Heart left ventricle (tissue), 16 donors: ENCODE measurements at regions of chr7 and their contacts with region 1.

Region 1: DNA sequence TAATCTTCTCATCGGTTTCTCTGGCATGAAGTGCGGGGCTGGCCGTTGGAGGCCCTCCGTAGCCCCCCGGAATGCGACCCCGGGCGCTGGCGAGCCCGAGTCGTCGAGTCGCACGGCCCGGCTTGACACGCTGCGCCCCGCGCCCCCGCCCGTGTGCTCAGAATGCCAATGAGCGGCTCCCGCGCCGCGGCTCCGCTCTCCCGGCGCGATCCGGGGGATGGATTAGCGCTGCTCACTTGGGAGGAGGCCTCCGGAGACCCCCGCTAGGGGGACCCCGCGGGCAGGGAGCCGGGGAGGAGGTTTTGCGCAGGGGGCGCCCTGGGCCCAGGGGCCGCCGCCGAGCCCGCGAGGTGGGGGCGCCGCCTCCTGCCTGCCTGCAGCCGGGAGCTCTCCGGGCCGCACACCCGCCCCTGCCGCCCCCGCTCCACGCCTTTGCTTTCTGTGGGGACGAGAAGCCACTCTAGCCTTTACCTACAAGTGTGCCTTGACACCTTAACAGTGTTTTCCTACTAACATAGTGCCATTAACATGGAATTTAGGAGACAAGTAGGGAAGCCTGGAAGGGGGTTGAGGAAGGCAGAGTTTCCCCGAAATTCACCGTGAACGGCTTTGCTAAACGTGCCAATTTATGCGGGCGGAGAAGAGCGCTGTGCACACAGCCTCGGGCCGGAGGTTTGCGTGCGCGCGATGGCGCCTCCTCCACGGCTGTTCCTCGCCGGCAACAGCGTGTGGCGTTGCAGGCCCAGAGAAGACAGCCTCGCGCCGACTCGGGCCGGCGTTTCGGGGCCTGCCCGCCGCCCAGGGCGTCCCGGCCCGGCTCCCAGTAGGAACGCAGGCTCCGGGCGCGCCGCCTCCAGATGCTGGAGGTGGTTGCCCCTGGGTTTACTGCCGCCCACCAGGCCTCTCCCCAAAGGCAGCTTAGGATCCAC is 7.1 kb downstream of the SHH start:
- DNase-seq: peak in 3 of 5 donors; percentile 31 to 69 (median 50)
- ATAC-seq: peak in 3 of 4 donors; percentile 63 to 82 (median 75)
- H3K4me3 ChIP-seq: peak overlapping the region; percentile 12 to 52 (median 40)
- H3K27ac ChIP-seq: no peak overlapping the region
- H3K4me1 ChIP-seq: peaks cover 0 to 70% (median 34%) of the 10 kb centered on the region in 12 donors
- H3K27me3 ChIP-seq: peaks cover 68 to 100% (median 92%) of the 10 kb centered on the region in 9 donors
- CTCF ChIP-seq: peak in 11 of 12 donors; percentile 13 to 60 (median 40)
- POLR2A ChIP-seq: no peak

Region 2: GRCh38 chr7:155653803-155654202 is 151.4 kb before region 1 on chr7:
- intact Hi-C with region 1: no loop called
- DNase-seq: no peak
- ATAC-seq: peak in 2 of 4 donors; percentile 41 to 68
- H3K4me3 ChIP-seq: no peak overlapping the region
- H3K27ac ChIP-seq: no peak overlapping the region
- H3K4me1 ChIP-seq: peaks cover 0 to 64% (median 25%) of the 10 kb centered on the region in 12 donors
- H3K27me3 ChIP-seq: no peaks in the 10 kb centered on the region
- CTCF ChIP-seq: no peak
- POLR2A ChIP-seq: no peak

Region 3: DNA sequence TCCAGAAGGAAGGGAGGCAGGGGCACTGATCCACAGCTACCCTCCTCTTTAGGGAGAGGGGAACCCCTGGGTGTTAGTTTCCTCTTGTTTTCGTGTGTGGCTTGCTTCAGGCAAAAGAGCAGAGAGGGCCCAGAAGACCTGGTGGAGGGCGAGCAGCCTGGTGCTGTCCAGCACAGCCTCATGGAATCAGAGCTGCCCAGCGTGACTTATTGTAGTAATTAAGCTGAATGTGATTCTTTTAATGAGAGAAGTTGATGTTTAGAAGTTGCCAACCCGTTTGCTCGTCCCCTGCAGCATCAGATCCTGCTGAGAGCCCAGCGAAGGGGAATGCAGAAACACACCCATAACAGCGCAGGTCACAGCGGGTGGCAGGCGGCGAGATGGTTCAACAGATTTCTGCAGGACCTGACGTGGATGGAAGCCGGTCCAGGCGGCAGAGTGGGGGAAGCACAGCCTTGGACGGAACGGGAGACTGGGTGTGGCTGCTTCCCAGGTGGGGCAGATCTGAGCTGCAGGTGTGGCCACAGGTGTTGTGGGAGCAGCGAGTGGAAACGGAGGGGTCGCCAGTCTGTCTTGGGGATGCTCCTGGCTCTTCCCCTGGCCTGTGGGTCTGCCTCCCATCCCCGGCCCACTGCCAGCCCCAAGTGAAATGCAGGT is 60.8 kb after region 1 on chr7:
- intact Hi-C with region 1: no loop called
- DNase-seq: peak in 2 of 5 donors; percentile 2 to 38
- ATAC-seq: no peak
- H3K4me3 ChIP-seq: no peak overlapping the region
- H3K27ac ChIP-seq: no peak overlapping the region
- H3K4me1 ChIP-seq: peaks cover 0 to 5% (median 0%) of the 10 kb centered on the region in 12 donors
- H3K27me3 ChIP-seq: peaks cover 0 to 45% (median 6%) of the 10 kb centered on the region in 9 donors
- CTCF ChIP-seq: no peak
- POLR2A ChIP-seq: no peak

Region 4: GRCh38 chr7:156764016-156764669 is 959.0 kb after region 1 on chr7:
- intact Hi-C with region 1: loop called in 3 of 10 experiments (anchors 5 to 10 kb)
- DNase-seq: peak; percentile 59 to 76 (median 64)
- ATAC-seq: peak; percentile 93 to 98 (median 96)
- H3K4me3 ChIP-seq: no peak overlapping the region
- H3K27ac ChIP-seq: no peak overlapping the region
- H3K4me1 ChIP-seq: peaks cover 0 to 9% (median 0%) of the 10 kb centered on the region in 12 donors
- H3K27me3 ChIP-seq: no peaks in the 10 kb centered on the region
- CTCF ChIP-seq: peak; percentile 39 to 73 (median 62)
- POLR2A ChIP-seq: no peak

Region 5: DNA sequence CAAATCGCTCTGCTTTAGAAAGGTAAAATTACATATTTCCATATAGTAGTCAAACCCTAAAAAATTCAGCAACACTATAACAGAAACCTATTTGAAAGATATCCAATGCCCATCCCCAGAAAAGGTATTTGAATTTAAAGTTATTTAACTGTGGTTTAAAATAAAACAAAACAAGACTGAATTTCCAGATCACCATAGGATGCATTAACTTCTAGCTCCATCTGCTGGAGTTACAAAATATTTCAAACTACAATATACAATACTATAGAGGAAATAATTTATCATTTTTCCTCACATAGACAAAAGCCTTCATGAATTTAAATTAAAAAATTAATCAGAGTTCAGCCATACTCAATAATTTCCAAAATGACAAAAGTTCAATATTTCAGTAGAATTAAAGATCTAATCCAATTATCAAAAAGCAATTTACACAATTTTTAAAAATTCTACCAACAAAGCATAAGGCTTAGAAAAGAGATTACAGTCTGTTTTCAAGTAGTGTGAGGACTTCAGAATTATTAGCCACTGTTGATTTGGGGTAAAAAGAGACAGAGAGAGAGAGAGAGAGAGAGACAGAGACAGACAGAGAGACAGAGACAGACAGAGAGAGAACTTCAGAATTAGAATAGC is 1011.9 kb after region 1 on chr7:
- intact Hi-C with region 1: loop called in 2 of 10 experiments (anchors 10 kb)
- DNase-seq: no peak
- ATAC-seq: no peak
- H3K4me3 ChIP-seq: no peak overlapping the region
- H3K27ac ChIP-seq: no peak overlapping the region
- H3K4me1 ChIP-seq: no peaks in the 10 kb centered on the region
- H3K27me3 ChIP-seq: no peaks in the 10 kb centered on the region
- CTCF ChIP-seq: peak in 10 of 12 donors; percentile 17 to 52 (median 33)
- POLR2A ChIP-seq: no peak